ENCODE measurements at regions of chr2 and their contacts with region 1.

Region 1: GRCh38 chr2:221573430-221574230 is 1.5 kb upstream of the EPHA4 start:
- DNase-seq: peak; percentile 86 to 94 (median 94)
- ATAC-seq: peak; percentile 86
- H3K4me3 ChIP-seq: peak overlapping the region; percentile 96
- H3K27ac ChIP-seq: peak overlapping the region; percentile 51
- H3K4me1 ChIP-seq: peaks cover 2% of the 10 kb centered on the region
- H3K27me3 ChIP-seq: no peaks in the 10 kb centered on the region

Region 2: DNA sequence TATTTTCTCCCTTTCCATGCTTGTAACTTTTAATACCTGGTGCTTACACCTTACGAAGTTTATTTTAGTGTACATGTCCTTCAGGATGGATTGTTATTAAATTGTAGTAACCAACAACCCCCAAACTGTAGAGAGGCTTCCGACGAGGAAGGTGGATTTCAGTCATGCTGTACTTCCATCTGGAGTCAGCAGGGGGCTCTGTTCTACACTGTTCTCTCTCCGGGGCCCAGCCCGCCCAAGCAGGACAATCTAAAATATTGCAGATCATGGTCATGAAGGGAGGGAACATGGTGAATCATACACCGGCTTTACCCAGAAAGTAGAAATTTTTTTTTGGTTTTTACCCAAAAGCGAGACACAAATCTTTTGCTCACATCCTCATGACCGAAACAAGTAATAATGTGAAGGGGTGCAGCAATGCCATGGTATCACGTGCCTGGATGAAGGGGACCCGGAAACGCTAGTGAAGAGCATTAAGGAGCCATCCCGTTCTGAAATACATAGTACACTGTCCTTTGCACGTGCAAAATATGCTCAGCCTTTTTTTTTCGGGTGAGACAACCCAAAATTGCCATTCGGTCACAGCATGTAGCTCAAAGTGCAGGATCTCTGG is 886.3 kb before region 1 on chr2:
- intact Hi-C with region 1: loop called (anchors 2 to 5 kb)
- DNase-seq: peak; percentile 72 to 83 (median 76)
- ATAC-seq: peak; percentile 83 to 88
- H3K4me3 ChIP-seq: no peak overlapping the region
- H3K27ac ChIP-seq: no peak overlapping the region
- H3K4me1 ChIP-seq: no peaks in the 10 kb centered on the region
- H3K27me3 ChIP-seq: no peaks in the 10 kb centered on the region

Region 3: DNA sequence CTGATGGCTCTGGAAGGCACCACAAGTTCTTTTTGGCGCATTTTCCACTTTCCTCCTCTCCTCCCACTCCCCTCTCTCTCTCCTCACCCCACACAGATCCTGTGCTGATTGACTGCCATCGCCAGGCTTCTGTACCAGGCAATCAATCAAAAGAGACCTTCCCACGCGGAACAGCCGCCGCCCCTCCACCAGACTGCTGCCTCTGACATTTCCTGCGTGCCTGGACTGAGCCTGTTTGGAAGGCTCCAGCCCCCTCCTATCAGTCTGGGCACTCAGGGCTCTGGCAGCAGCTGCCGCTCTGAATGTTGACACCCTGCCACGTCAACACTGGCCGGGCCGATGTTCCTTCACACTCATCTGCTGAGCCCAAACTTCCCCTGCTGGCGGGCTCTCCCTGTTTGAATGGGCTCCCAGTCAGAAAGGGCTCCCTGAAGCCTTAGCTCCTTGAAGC is 469.2 kb before region 1 on chr2:
- intact Hi-C with region 1: loop called in 2 of 4 experiments (anchors 10 kb)
- DNase-seq: peak; percentile 88 to 95 (median 93)
- ATAC-seq: peak; percentile 98
- H3K4me3 ChIP-seq: no peak overlapping the region
- H3K27ac ChIP-seq: peak overlapping the region; percentile 67
- H3K4me1 ChIP-seq: peaks cover 9% of the 10 kb centered on the region
- H3K27me3 ChIP-seq: no peaks in the 10 kb centered on the region

Region 4: DNA sequence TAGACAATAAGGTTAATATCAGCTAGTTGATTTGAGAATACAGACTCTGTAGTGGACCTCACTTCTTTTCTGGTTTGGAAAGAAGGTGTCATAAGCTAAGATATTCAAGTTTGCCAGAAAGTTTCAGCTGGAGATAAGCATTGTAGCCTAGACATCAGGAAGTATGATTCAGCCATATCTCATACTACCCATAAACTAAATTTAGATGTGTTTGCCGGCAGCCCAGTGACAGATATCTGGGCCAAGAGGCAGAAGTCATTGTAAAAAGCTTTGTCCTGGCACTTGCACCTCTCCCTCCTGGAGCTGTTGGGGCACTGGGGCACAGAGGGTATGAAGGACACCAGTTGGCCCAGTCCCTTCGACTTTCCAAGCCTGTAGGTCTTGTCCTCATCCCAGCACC is 129.5 kb before region 1 on chr2:
- intact Hi-C with region 1: loop called in 1 of 4 experiments (anchors 5 kb)
- DNase-seq: peak; percentile 32 to 64 (median 62)
- ATAC-seq: peak; percentile 86 to 95
- H3K4me3 ChIP-seq: no peak overlapping the region
- H3K27ac ChIP-seq: peak overlapping the region; percentile 62
- H3K4me1 ChIP-seq: peaks cover 2% of the 10 kb centered on the region
- H3K27me3 ChIP-seq: no peaks in the 10 kb centered on the region

Region 5: GRCh38 chr2:221517696-221518151 is 55.9 kb before region 1 on chr2:
- intact Hi-C with region 1: loop called in 1 of 4 experiments (anchors 10 kb)
- DNase-seq: peak in 2 of 3 donors; percentile 25 to 59
- ATAC-seq: peak; percentile 59 to 83
- H3K4me3 ChIP-seq: no peak overlapping the region
- H3K27ac ChIP-seq: peak overlapping the region; percentile 1
- H3K4me1 ChIP-seq: peaks cover 23% of the 10 kb centered on the region
- H3K27me3 ChIP-seq: no peaks in the 10 kb centered on the region

Region 6: GRCh38 chr2:222076973-222077691 is 503.5 kb after region 1 on chr2:
- intact Hi-C with region 1: no loop called
- DNase-seq: no peak
- ATAC-seq: no peak
- H3K4me3 ChIP-seq: no peak overlapping the region
- H3K27ac ChIP-seq: no peak overlapping the region
- H3K4me1 ChIP-seq: no peaks in the 10 kb centered on the region
- H3K27me3 ChIP-seq: no peaks in the 10 kb centered on the region